Activated CD4-positive, alpha-beta T cell treated with anti-CD3 and anti-CD28 coated beads for 36 hours (primary cell): ENCODE measurements at regions of chr3 and their contacts with region 1.

Region 1: GRCh38 chr3:197186887-197187588 is 111.4 kb downstream of the DLG1 start:
- DNase-seq: peak; percentile 16
- ATAC-seq: peak; percentile 73
- H3K4me3 Mint-ChIP-seq: no peak overlapping the region
- H3K27ac Mint-ChIP-seq: no peak overlapping the region
- H3K4me1 Mint-ChIP-seq: peaks cover 16% of the 10 kb centered on the region
- H3K27me3 Mint-ChIP-seq: no peaks in the 10 kb centered on the region

Region 2: DNA sequence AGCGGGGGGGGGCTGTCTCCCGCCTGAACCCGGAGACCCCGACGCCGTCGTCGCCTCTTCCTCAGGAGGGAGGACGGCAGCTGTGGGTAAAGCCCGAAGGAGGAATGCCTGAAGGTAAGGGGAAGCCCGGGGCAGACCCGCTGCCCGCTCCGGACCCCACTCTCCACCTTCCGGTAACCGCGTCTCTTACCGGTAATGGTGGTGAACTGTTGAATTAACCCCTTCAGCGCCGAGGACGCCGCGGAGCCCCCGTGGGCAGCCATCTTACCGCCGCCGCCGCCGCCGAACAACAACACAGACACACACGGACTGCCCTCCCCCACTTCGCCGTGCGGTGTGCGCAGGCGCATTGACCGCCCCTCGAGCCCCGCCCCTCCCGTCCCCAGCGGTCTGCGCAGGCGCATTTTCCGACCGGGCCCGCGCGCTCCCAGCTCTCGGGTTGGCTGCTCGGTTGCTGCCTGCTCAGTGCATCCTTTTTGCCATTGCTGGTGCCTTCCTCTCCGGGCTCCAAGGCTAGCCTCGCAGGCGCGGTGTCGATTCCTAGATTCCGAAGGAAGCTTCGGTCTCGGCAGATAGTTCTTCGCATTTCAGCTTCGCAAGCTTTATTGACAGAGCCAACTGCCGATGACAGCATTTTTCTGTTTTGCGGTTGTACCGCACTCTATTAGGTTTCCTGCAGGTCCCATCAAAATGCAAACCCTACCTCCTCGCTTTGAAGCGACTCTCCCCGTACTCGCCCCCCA is 754.7 kb before region 1 on chr3 and contains the start of gene UBXN7:
- CTCF ChIA-PET with region 1: no interaction called
- POLR2A ChIA-PET with region 1: no interaction called
- intact Hi-C with region 1: no loop called
- DNase-seq: peak; percentile 98
- ATAC-seq: peak; percentile 89
- H3K4me3 Mint-ChIP-seq: peak within 1 kb of the TSS; percentile 79
- H3K27ac Mint-ChIP-seq: peak within 1 kb of the TSS; percentile 95
- H3K4me1 Mint-ChIP-seq: peaks cover 20% of the 10 kb centered on the region
- H3K27me3 Mint-ChIP-seq: no peaks in the 10 kb centered on the region
- total RNA-seq, gene UBXN7: 67.2 to 102 TPM

Region 3: DNA sequence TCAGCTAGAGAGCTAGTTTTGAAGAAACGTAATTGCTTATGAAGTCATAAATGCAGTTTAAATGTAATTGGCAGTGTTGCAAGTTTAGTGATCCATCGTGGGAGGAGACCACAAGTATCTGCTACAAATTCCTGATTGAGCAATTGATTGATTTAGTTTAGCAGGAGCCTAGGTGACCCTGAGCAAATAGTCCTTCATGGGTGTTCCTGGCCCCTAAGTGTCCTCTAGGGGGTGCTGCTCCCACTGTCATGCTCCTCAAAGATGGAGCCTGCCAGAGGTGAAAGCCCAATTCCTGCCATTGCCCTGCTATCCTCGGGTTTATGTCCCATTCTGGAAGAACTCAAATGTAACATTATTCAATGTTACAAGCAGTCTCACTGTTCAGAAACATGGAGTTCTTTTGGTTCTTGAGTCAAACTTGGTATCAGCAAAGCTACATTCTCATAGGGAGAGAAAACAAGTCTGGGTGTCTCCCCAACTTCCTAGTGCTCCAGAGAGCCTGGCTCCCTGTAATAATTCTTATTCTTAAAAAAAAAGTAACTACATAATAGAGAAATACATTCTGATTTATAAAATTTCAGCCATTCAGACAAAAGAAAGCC is 349.1 kb before region 1 on chr3:
- CTCF ChIA-PET with region 1: no interaction called
- POLR2A ChIA-PET with region 1: no interaction called
- intact Hi-C with region 1: loop called (anchors 5 kb)
- DNase-seq: peak; percentile 87
- ATAC-seq: peak; percentile 94
- H3K4me3 Mint-ChIP-seq: no peak overlapping the region
- H3K27ac Mint-ChIP-seq: no peak overlapping the region
- H3K4me1 Mint-ChIP-seq: no peaks in the 10 kb centered on the region
- H3K27me3 Mint-ChIP-seq: no peaks in the 10 kb centered on the region

Region 4: GRCh38 chr3:196979545-196979944 is 207.5 kb before region 1 on chr3:
- CTCF ChIA-PET with region 1: interaction called, 7 read pairs
- POLR2A ChIA-PET with region 1: no interaction called
- intact Hi-C with region 1: loop called (anchors 1 kb)
- DNase-seq: no peak
- ATAC-seq: no peak
- H3K4me3 Mint-ChIP-seq: no peak overlapping the region
- H3K27ac Mint-ChIP-seq: no peak overlapping the region
- H3K4me1 Mint-ChIP-seq: no peaks in the 10 kb centered on the region
- H3K27me3 Mint-ChIP-seq: no peaks in the 10 kb centered on the region

Region 5: DNA sequence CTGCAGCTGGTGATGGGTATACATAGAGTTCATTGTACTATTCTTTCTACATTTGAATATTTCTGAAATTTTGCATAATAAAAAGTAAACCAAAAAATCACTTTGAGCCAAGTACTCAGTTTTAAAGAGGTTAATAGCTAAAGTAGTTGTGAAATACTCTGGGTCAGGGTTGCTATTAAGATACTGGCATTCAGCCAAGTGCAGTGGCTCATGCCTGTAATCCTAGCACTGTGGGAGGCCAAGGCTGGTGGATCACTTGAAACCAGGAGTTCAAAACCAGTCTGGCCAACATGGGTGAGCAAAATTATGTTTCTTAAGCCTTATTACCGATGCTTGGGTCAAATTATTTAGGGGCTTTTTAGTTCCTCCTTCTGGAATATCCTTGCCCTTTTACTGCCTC is 35.5 kb before region 1 on chr3:
- CTCF ChIA-PET with region 1: no interaction called
- POLR2A ChIA-PET with region 1: no interaction called
- intact Hi-C with region 1: no loop called
- DNase-seq: no peak
- ATAC-seq: no peak
- H3K4me3 Mint-ChIP-seq: no peak overlapping the region
- H3K27ac Mint-ChIP-seq: no peak overlapping the region
- H3K4me1 Mint-ChIP-seq: peaks cover 2% of the 10 kb centered on the region
- H3K27me3 Mint-ChIP-seq: no peaks in the 10 kb centered on the region